HEK293 (cell line): ENCODE measurements at regions of chr17 and their contacts with region 1.

Region 1: DNA sequence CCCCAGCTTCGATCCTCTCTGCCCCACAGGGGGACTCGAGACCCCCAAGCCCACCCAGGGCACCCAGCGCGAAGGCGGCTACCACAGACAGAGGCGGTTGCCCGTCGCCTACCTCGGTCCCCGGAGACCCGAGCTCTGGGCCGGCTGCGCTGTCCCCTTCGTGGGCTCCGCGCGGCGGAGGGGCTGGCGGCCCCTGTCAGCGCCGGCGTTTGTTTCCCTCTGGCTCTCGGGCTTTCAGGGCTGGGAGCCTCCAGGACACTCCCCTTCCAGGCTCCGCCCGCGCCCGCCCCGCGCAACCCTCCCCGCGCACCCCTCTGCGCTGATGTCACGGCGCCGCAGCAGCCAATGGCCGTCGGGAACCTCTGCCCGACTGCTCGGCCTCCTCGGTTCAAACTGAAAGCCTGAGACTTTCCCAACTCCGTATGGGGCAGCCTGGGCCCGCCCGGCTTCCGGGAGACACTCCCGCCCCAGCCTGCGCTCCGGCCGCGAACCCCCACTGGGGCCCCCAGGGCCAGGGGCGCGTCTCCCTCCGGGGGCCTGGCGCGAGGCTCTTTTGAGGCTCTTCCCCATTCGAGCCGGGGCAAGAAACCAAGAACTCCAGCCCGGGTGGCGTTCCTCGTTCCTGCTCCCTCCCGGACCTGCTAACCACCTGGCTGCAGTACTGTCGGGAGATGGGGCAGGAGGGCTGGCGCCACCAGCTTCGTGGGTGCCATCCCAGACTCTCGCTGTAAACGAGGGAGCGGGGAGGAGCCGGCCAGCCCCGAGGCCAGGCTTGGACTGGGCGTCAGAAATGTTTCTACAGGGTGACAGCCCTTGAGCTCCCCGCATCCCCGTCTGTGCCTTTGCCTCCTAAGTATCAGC is at the start of gene CDC42EP4:
- H3K4me3 ChIP-seq: peak within 1 kb of the TSS; percentile 86
- H3K27ac ChIP-seq: peak within 1 kb of the TSS; percentile 88
- H3K4me1 ChIP-seq: peaks cover 19% of the 10 kb centered on the region
- CTCF ChIP-seq: no peak

Region 2: GRCh38 chr17:73278465-73279453 is 33.3 kb before region 1 on chr17:
- CTCF ChIA-PET with region 1: interaction called, 3 read pairs
- POLR2A ChIA-PET with region 1: interaction called, 11 read pairs
- H3K4me3 ChIP-seq: no peak overlapping the region
- H3K27ac ChIP-seq: peak overlapping the region; percentile 62
- H3K4me1 ChIP-seq: peaks cover 16% of the 10 kb centered on the region
- CTCF ChIP-seq: no peak

Region 3: GRCh38 chr17:73297934-73298861 is 13.8 kb before region 1 on chr17:
- CTCF ChIA-PET with region 1: interaction called, 5 read pairs
- POLR2A ChIA-PET with region 1: interaction called, 33 read pairs
- H3K4me3 ChIP-seq: no peak overlapping the region
- H3K27ac ChIP-seq: no peak overlapping the region
- H3K4me1 ChIP-seq: no peaks in the 10 kb centered on the region
- CTCF ChIP-seq: no peak